MCF 10A (cell line): ENCODE measurements at regions of chr12 and their contacts with region 1.

Region 1: DNA sequence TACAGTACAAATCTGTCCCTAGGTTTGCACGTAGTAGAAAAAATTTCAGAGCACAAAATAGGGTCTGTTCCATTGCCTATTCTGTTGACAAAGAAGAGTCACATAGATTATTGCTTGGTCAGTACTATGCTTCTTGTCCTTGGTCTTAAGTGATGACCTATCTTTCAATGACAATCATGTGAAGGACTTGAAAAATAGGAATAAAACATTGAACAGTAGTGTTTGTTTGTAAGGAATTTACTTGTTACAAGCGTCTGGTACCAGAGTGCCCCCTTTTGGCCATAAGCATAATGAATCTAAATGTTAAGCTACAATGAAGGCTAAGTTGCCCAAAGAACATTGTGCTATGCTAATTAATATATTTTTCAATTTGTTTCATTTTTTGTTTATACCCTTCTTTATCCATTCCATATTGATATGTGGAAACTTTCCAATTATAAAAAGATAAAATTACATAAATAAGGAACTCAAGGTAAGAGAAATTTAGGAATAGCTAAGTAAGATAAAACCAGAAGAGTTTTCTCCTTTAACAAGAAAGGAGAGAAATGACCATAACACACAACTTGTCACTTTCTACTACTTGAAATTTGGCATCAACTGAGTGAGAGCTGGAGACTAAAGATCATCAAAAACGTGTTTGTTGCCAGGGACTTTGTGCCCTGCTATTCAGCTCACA is 204.7 kb downstream of the EPS8 start:
- DNase-seq: peak; percentile 70
- H3K4me3 Mint-ChIP-seq: no peak overlapping the region
- H3K27ac Mint-ChIP-seq: peak overlapping the region; percentile 12
- H3K4me1 Mint-ChIP-seq: no peaks in the 10 kb centered on the region
- H3K27me3 Mint-ChIP-seq: no peaks in the 10 kb centered on the region
- CTCF ChIP-seq: peak; percentile 62

Region 2: GRCh38 chr12:15227004-15227679 is 357.4 kb before region 1 on chr12:
- CTCF ChIA-PET with region 1: interaction called, 10 read pairs
- POLR2A ChIA-PET with region 1: no interaction called
- intact Hi-C with region 1: loop called (anchors 2 kb)
- DNase-seq: peak; percentile 87
- H3K4me3 Mint-ChIP-seq: no peak overlapping the region
- H3K27ac Mint-ChIP-seq: peak overlapping the region; percentile 59
- H3K4me1 Mint-ChIP-seq: peaks cover 49% of the 10 kb centered on the region
- H3K27me3 Mint-ChIP-seq: no peaks in the 10 kb centered on the region
- CTCF ChIP-seq: peak; percentile 59

Region 3: GRCh38 chr12:15522565-15523187 is 61.8 kb before region 1 on chr12:
- CTCF ChIA-PET with region 1: interaction called, 218 read pairs
- POLR2A ChIA-PET with region 1: interaction called, 3 read pairs
- intact Hi-C with region 1: no loop called
- DNase-seq: peak; percentile 68
- H3K4me3 Mint-ChIP-seq: no peak overlapping the region
- H3K27ac Mint-ChIP-seq: no peak overlapping the region
- H3K4me1 Mint-ChIP-seq: peaks cover 17% of the 10 kb centered on the region
- H3K27me3 Mint-ChIP-seq: no peaks in the 10 kb centered on the region
- CTCF ChIP-seq: peak; percentile 69

Region 4: DNA sequence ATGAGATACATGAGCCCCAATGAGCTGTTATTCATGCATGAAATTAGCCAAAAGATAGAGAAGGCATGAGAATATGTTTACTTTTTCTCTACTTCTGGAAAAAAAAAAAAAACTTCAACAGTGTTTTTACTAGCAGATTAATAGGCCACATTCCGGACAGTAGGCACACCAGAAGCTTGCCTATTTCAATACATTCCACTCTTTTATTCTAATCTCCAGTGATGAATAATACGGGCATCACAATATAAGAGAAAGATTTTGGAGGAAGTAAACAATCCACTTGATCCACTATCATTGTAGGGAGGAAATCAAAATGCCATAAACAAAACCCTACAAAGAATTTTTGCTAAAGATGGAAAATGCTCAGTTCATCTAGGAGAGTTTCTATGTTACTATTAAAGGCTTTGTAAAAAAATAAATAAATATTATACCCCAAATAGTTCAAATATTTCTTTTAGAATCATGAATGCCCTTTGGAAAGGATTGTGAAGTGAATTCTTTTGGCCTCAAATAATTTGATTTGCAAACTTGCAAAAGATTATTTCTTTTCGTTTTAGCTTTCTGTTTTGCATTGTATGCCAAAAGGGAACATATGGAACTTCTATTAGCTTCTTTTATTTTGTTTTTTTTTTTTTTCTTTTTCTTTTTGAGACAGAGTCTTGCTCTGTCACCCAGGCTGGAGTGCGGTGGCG is 27.9 kb before region 1 on chr12:
- CTCF ChIA-PET with region 1: interaction called, 11 read pairs
- POLR2A ChIA-PET with region 1: no interaction called
- intact Hi-C with region 1: no loop called
- DNase-seq: no peak
- H3K4me3 Mint-ChIP-seq: no peak overlapping the region
- H3K27ac Mint-ChIP-seq: no peak overlapping the region
- H3K4me1 Mint-ChIP-seq: no peaks in the 10 kb centered on the region
- H3K27me3 Mint-ChIP-seq: no peaks in the 10 kb centered on the region
- CTCF ChIP-seq: no peak